ENCODE measurements at regions of chr9 and their contacts with region 1.

Region 1: DNA sequence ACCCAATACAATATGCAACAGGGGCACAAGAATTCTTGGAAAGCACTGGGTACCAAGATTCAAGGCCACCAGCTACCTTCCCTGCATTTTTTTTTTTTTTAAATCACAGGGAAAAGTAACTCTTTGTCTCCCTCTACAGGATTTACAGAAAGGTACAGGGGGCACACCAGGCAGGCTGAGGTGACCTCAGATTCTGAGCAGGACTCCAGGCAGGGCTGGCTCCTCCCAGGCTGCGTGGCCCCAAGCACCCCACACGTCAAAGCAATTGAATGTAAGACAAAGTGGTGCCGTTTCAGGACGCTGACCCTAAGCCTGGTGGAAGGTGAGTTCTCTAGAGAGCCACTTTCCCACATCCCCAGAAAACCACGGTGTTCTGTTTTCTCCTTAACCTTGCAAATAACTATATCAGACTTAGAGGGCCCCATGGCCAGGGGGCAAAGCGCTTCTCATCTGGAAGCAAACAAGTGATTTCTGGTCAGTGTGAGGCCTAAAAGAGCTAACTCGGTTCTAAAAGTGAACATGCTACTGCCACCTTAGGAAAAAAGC is 222.6 kb downstream of the ROR2 start:
- DNase-seq: peak; percentile 51
- ATAC-seq: peak; percentile 100
- H3K4me3 Mint-ChIP-seq: no peak overlapping the region
- H3K27ac Mint-ChIP-seq: no peak overlapping the region
- H3K4me1 Mint-ChIP-seq: peaks cover 6% of the 10 kb centered on the region
- H3K27me3 Mint-ChIP-seq: no peaks in the 10 kb centered on the region
- CTCF ChIP-seq: peak; percentile 58; the same call in 1 of the 2 replicates

Region 2: GRCh38 chr9:91659529-91660495 is 67.6 kb before region 1 on chr9:
- CTCF ChIA-PET with region 1: interaction called, 15 read pairs
- POLR2A ChIA-PET with region 1: no interaction called
- DNase-seq: peak; percentile 46
- ATAC-seq: peak; percentile 99
- H3K4me3 Mint-ChIP-seq: no peak overlapping the region
- H3K27ac Mint-ChIP-seq: no peak overlapping the region
- H3K4me1 Mint-ChIP-seq: peaks cover 14% of the 10 kb centered on the region
- H3K27me3 Mint-ChIP-seq: peaks cover 3% of the 10 kb centered on the region; the same call in 1 of the 2 replicates
- CTCF ChIP-seq: no peak; the same call in 1 of the 2 replicates

Measured in WTC11 (cell line).